ENCODE measurements at regions of chr19 and their contacts with region 1.

Region 1: DNA sequence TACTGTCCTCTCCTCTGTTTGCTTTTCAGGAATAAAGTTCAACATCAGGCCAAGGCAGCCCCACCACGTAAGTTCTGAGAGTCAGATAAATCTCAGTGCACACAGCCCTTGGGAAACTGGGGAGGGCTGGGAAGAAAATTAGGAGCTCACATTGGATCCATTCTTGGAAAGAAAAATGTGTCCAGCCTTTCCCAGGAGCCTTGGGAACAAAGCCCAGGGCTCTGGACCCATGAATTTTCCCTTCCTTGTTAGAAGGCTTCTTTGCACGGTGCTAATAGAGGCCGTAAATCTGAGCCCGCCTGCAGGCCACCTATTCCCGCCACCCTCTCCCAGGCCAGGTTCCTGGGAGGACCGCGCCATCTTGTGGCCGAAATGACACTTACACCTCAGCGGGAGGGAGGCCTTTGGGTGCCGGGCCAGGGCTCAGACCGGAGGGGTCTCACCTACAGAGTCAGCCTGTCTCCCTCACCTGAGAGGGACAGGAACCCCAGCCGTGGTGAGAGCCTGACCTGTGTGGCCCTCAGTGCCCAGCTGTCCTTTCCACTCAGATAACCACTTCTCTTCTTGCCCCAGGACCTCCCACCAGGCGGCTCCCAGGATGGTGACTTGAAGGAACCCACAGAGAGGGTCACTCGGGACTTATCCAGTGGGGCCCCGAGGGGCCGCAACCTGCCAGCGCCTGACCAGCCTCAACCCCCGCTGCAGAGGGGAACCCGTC is 25.1 kb upstream of the KCTD15 start:
- DNase-seq: peak; percentile 86
- ATAC-seq: peak; percentile 78
- H3K4me3 Mint-ChIP-seq: no peak overlapping the region
- H3K27ac Mint-ChIP-seq: no peak overlapping the region
- H3K4me1 Mint-ChIP-seq: no peaks in the 10 kb centered on the region
- H3K27me3 Mint-ChIP-seq: peaks cover 12% of the 10 kb centered on the region

Region 2: DNA sequence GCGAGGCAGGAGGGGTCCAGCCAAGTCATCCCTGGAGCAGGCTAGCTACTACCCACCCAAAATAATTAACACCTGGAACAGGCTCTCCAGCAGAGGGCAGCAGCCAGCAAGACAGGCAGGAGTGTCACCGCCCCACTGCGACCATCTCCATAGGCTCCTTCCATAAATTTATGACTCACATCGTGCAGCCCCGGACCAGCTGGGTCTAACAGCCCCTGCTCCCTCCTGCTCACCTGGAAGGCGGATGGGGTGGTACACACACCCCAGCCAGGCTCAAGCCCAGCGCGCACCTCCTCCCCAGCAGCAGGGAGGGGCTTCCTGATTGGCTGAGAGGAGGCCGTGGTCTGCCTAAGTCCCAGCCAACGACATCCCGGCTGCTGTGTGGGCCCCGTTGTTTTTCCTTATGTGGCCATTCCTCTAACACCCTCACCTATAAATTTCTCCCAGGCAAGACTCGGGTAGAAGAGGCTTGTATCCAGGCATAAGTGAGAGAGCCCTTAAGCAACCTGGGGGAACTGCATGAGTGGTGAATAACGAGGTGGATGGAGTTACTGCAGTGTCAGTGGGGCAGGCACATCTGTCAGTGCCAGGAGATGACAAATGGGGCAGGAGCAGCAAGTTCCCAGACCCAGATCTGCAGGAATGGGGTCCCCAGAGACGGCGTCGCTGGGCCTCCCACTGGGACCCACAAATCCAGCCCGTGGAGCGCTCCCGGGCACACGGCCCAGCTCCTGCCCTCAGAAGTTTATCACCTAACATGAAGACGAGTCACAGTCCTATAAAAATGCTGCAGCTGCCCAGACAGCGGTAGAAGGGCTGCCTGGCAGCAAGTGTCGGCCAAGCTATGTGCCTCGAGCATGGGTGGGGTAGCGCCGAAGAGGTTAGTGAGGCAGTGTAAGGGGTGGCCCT is 355.0 kb before region 1 on chr19:
- CTCF ChIA-PET with region 1: interaction called, 7 read pairs
- POLR2A ChIA-PET with region 1: no interaction called
- intact Hi-C with region 1: loop called (anchors 1 kb)
- DNase-seq: peak; percentile 84
- ATAC-seq: peak; percentile 89
- H3K4me3 Mint-ChIP-seq: peak overlapping the region; percentile 33
- H3K27ac Mint-ChIP-seq: no peak overlapping the region
- H3K4me1 Mint-ChIP-seq: peaks cover 5% of the 10 kb centered on the region
- H3K27me3 Mint-ChIP-seq: no peaks in the 10 kb centered on the region

Region 3: GRCh38 chr19:33720691-33721682 is 50.6 kb before region 1 on chr19:
- CTCF ChIA-PET with region 1: no interaction called
- POLR2A ChIA-PET with region 1: no interaction called
- intact Hi-C with region 1: loop called in 1 of 2 experiments (anchors 2 kb)
- DNase-seq: peak; percentile 10
- ATAC-seq: no peak
- H3K4me3 Mint-ChIP-seq: no peak overlapping the region
- H3K27ac Mint-ChIP-seq: no peak overlapping the region
- H3K4me1 Mint-ChIP-seq: no peaks in the 10 kb centered on the region
- H3K27me3 Mint-ChIP-seq: peaks cover 23% of the 10 kb centered on the region

Region 4: GRCh38 chr19:33758541-33759013 is 13.0 kb before region 1 on chr19:
- CTCF ChIA-PET with region 1: no interaction called
- POLR2A ChIA-PET with region 1: no interaction called
- intact Hi-C with region 1: no loop called
- DNase-seq: no peak
- ATAC-seq: no peak
- H3K4me3 Mint-ChIP-seq: no peak overlapping the region
- H3K27ac Mint-ChIP-seq: no peak overlapping the region
- H3K4me1 Mint-ChIP-seq: no peaks in the 10 kb centered on the region
- H3K27me3 Mint-ChIP-seq: peaks cover 5% of the 10 kb centered on the region

Region 5: GRCh38 chr19:33905937-33906576 is 134.5 kb after region 1 on chr19:
- CTCF ChIA-PET with region 1: no interaction called
- POLR2A ChIA-PET with region 1: no interaction called
- intact Hi-C with region 1: no loop called
- DNase-seq: peak; percentile 29
- ATAC-seq: no peak
- H3K4me3 Mint-ChIP-seq: no peak overlapping the region
- H3K27ac Mint-ChIP-seq: no peak overlapping the region
- H3K4me1 Mint-ChIP-seq: peaks cover 5% of the 10 kb centered on the region
- H3K27me3 Mint-ChIP-seq: peaks cover 50% of the 10 kb centered on the region

Region 6: GRCh38 chr19:34577531-34578107 is 806.1 kb after region 1 on chr19:
- CTCF ChIA-PET with region 1: no interaction called
- POLR2A ChIA-PET with region 1: no interaction called
- intact Hi-C with region 1: no loop called
- DNase-seq: no peak
- ATAC-seq: no peak
- H3K4me3 Mint-ChIP-seq: no peak overlapping the region
- H3K27ac Mint-ChIP-seq: no peak overlapping the region
- H3K4me1 Mint-ChIP-seq: no peaks in the 10 kb centered on the region
- H3K27me3 Mint-ChIP-seq: peaks cover 19% of the 10 kb centered on the region

Measured in activated CD4-positive, alpha-beta T cell treated with anti-CD3 and anti-CD28 coated beads for 36 hours (primary cell).